ENCODE measurements at regions of chr10 and their contacts with region 1.

Region 1: GRCh38 chr10:34815185-34816084 is at the start of gene PARD3:
- DNase-seq: peak; percentile 79 to 80 (median 80)
- ATAC-seq: peak; percentile 74 to 86 (median 82)
- H3K4me3 ChIP-seq: peak within 1 kb of the TSS; percentile 90 to 96 (median 95)
- H3K27ac ChIP-seq: peak within 1 kb of the TSS; percentile 69 to 87 (median 76)
- H3K4me1 ChIP-seq: peaks cover 0 to 21% (median 4%) of the 10 kb centered on the region in 4 donors
- H3K27me3 ChIP-seq: no peaks in the 10 kb centered on the region
- CTCF ChIP-seq: no peak
- POLR2A ChIP-seq: peak; percentile 15
- total RNA-seq, gene PARD3: 19.1 to 27.8 (median 22.0) TPM

Region 2: GRCh38 chr10:34723750-34724149 is 91.7 kb before region 1 on chr10:
- intact Hi-C with region 1: loop called (anchors 10 kb)
- DNase-seq: peak in 2 of 3 donors; percentile 34 to 65
- ATAC-seq: peak; percentile 89 to 96 (median 92)
- H3K4me3 ChIP-seq: no peak overlapping the region
- H3K27ac ChIP-seq: no peak overlapping the region
- H3K4me1 ChIP-seq: peaks cover 0 to 15% (median 6%) of the 10 kb centered on the region in 4 donors
- H3K27me3 ChIP-seq: no peaks in the 10 kb centered on the region
- CTCF ChIP-seq: peak; percentile 54 to 74 (median 62)
- POLR2A ChIP-seq: no peak